ENCODE measurements at regions of chr6 and their contacts with region 1.

Region 1: GRCh38 chr6:159646733-159647132 is 46.3 kb downstream of the SOD2 start:
- DNase-seq: no peak
- H3K4me3 ChIP-seq: no peak overlapping the region
- H3K27ac ChIP-seq: no peak overlapping the region
- H3K4me1 ChIP-seq: peaks cover 0 to 8% (median 2%) of the 10 kb centered on the region in 3 donors
- H3K27me3 ChIP-seq: no peaks in the 10 kb centered on the region
- CTCF ChIP-seq: no peak
- POLR2A ChIP-seq: no peak

Region 2: GRCh38 chr6:159169193-159169555 is 477.6 kb before region 1 on chr6 and contains the start of gene FNDC1:
- intact Hi-C with region 1: loop called (anchors 10 kb)
- DNase-seq: no peak
- H3K4me3 ChIP-seq: peak within 1 kb of the TSS; percentile 11 to 64 (median 36)
- H3K27ac ChIP-seq: no peak within 1 kb of the TSS
- H3K4me1 ChIP-seq: peaks cover 9 to 40% (median 17%) of the 10 kb centered on the region in 3 donors
- H3K27me3 ChIP-seq: peaks cover 0 to 81% (median 5%) of the 10 kb centered on the region in 4 donors
- CTCF ChIP-seq: peak in 2 of 6 experiments; percentile 12 to 32
- POLR2A ChIP-seq: no peak
- total RNA-seq, gene FNDC1: 0.04 to 0.38 (median 0.06) TPM in 3 of 4 donors, not detected in the other

Region 3: DNA sequence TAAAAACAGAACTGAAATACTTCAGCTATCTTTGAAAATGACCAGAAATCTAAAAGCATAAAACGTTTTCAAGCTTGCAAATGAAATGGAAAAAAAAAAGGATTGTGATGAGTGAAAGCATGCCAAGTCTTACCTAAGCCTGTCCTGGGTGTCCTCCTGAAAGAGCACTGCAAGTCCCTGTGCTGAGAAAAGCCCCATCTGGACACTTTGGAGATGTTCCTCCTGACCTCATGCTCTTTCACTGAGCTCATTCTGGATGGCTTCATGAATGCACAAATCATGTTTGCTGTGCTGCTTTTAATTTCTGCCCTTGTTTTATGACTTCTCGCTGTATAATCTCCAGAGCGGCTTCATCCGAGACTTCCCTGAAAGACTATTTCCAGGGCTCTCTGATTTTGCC is 89.7 kb before region 1 on chr6:
- intact Hi-C with region 1: no loop called
- DNase-seq: no peak
- H3K4me3 ChIP-seq: no peak overlapping the region
- H3K27ac ChIP-seq: no peak overlapping the region
- H3K4me1 ChIP-seq: no peaks in the 10 kb centered on the region
- H3K27me3 ChIP-seq: no peaks in the 10 kb centered on the region
- CTCF ChIP-seq: no peak
- POLR2A ChIP-seq: no peak